CD4-positive, alpha-beta T cell (primary cell): ENCODE measurements at regions of chr3 and their contacts with region 1.

Region 1: DNA sequence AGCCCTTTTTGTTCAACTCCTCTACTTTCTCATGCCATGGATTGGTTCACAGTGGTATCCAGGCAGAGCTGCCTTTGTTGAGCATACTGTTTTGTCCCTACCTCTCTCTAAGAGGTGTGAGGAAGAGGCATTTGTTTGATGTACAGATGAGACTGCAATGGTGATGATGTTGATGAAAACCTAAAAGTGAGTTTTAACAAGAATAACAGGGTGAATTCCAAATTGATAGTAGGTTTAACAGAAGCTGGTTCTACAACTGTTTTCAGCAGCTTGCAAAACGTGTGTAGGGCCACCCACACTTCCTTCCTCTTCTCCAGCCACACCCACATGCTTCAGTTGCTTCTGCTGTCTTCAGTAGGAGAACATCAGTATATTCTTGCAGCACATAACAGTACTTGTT is 10.2 kb downstream of the SNRK start:
- DNase-seq: peak; percentile 32 to 90 (median 58)
- ATAC-seq: peak; percentile 91
- H3K4me3 ChIP-seq: peak overlapping the region; percentile 35
- H3K4me3 Mint-ChIP-seq: peak overlapping the region; percentile 73
- H3K27ac ChIP-seq: peak overlapping the region; percentile 59 to 68
- H3K27ac Mint-ChIP-seq: peak overlapping the region; percentile 91
- H3K4me1 ChIP-seq: peaks cover 53% of the 10 kb centered on the region
- H3K4me1 Mint-ChIP-seq: peaks cover 87% of the 10 kb centered on the region
- H3K27me3 ChIP-seq: no peaks in the 10 kb centered on the region
- H3K27me3 Mint-ChIP-seq: no peaks in the 10 kb centered on the region
- CTCF ChIP-seq: no peak

Region 2: GRCh38 chr3:43180027-43180426 is 116.5 kb before region 1 on chr3:
- CTCF ChIA-PET with region 1: no interaction called
- POLR2A ChIA-PET with region 1: interaction called, 16 read pairs
- intact Hi-C with region 1: no loop called
- DNase-seq: peak in 11 of 14 experiments; percentile 14 to 87 (median 35)
- ATAC-seq: peak; percentile 86
- H3K4me3 ChIP-seq: peak overlapping the region; percentile 7
- H3K4me3 Mint-ChIP-seq: peak overlapping the region; percentile 71
- H3K27ac ChIP-seq: peak overlapping the region; percentile 49 to 77
- H3K27ac Mint-ChIP-seq: peak overlapping the region; percentile 91
- H3K4me1 ChIP-seq: peaks cover 54% of the 10 kb centered on the region
- H3K4me1 Mint-ChIP-seq: peaks cover 67% of the 10 kb centered on the region
- H3K27me3 ChIP-seq: no peaks in the 10 kb centered on the region
- H3K27me3 Mint-ChIP-seq: no peaks in the 10 kb centered on the region
- CTCF ChIP-seq: no peak

Region 3: DNA sequence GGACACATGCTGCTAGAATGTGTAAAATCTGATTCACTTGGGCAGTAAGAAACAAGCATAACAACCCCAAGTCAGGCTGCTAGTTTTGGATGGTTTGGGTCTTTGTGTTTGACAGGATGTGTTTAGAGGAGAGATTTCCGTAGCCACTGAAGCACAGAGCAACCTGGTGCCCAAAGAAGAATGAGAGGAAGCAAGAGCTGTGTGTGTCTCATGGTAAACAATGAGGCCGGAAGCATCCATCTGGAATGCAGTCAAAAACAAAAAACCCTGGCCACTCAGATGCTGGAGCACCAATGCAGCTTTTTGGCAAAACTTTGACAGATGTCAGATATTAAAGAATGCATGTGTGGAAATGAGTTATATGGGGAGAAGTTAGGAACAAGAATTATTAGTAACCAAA is 49.6 kb before region 1 on chr3:
- CTCF ChIA-PET with region 1: no interaction called
- POLR2A ChIA-PET with region 1: interaction called, 15 read pairs
- intact Hi-C with region 1: no loop called
- DNase-seq: peak in 6 of 14 experiments; percentile 5 to 62 (median 23)
- ATAC-seq: peak; percentile 82
- H3K4me3 ChIP-seq: no peak overlapping the region
- H3K4me3 Mint-ChIP-seq: no peak overlapping the region
- H3K27ac ChIP-seq: peak overlapping the region; percentile 2 to 39
- H3K27ac Mint-ChIP-seq: peak overlapping the region; percentile 18
- H3K4me1 ChIP-seq: peaks cover 46% of the 10 kb centered on the region
- H3K4me1 Mint-ChIP-seq: peaks cover 66% of the 10 kb centered on the region
- H3K27me3 ChIP-seq: no peaks in the 10 kb centered on the region
- H3K27me3 Mint-ChIP-seq: no peaks in the 10 kb centered on the region
- CTCF ChIP-seq: no peak

Region 4: DNA sequence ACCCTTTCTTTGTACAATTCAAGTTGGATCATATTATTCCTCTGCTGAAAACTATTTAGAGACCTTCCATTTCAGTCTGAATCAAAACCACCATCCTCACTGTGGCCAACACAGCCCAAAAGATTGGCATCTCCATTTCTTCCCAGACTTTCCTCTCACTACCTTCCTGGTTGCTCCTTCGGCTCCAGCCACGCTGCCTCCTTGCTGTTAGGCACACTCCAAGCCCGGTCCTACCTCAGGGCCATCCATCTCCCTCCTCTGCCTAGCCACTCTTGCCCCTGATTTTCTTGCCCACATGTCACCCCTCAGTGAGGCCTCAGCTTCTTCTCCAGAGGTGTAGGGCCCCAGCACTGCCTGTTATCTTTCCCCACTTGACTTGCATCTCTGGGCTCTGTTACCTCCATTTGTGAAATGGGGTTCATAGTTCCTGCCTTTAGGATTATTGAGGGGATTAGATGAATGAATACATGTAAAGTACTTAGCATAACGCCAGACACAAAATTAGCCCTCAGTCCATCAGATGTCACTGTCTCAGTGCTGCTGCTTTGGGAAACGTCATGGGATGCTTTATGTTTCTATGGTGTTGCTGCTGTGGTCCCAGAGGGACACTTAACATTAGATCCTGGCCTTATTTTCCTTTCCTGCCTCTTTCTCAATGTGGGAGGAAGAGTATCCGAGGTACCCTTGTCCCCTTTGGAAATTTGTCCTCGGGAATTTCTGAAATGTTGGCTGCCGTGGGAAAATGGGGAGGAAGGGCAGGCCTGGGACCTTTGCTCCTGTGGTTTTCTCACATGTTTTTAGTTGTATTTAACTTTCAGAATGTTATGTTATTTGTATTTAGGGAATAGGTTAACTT is 21.1 kb after region 1 on chr3:
- CTCF ChIA-PET with region 1: interaction called, 8 read pairs
- POLR2A ChIA-PET with region 1: interaction called, 6 read pairs
- intact Hi-C with region 1: loop called in 1 of 2 experiments (anchors 2 kb)
- DNase-seq: no peak
- ATAC-seq: peak; percentile 21
- H3K4me3 ChIP-seq: no peak overlapping the region
- H3K4me3 Mint-ChIP-seq: peak overlapping the region; percentile 69
- H3K27ac ChIP-seq: no peak overlapping the region
- H3K27ac Mint-ChIP-seq: peak overlapping the region; percentile 57
- H3K4me1 ChIP-seq: peaks cover 38% of the 10 kb centered on the region
- H3K4me1 Mint-ChIP-seq: peaks cover 95% of the 10 kb centered on the region
- H3K27me3 ChIP-seq: no peaks in the 10 kb centered on the region
- H3K27me3 Mint-ChIP-seq: no peaks in the 10 kb centered on the region
- CTCF ChIP-seq: no peak

Region 5: GRCh38 chr3:43345877-43346276 is 49.3 kb after region 1 on chr3:
- CTCF ChIA-PET with region 1: no interaction called
- POLR2A ChIA-PET with region 1: interaction called, 69 read pairs
- intact Hi-C with region 1: loop called (anchors 2 to 5 kb)
- DNase-seq: no peak
- ATAC-seq: no peak
- H3K4me3 ChIP-seq: no peak overlapping the region
- H3K4me3 Mint-ChIP-seq: peak overlapping the region; percentile 58
- H3K27ac ChIP-seq: peak overlapping the region; percentile 36 to 62
- H3K27ac Mint-ChIP-seq: peak overlapping the region; percentile 96
- H3K4me1 ChIP-seq: peaks cover 71% of the 10 kb centered on the region
- H3K4me1 Mint-ChIP-seq: peaks cover 91% of the 10 kb centered on the region
- H3K27me3 ChIP-seq: no peaks in the 10 kb centered on the region
- H3K27me3 Mint-ChIP-seq: no peaks in the 10 kb centered on the region
- CTCF ChIP-seq: no peak